Transverse colon (tissue), 4 donors: ENCODE measurements at regions of chr2 and their contacts with region 1.

Region 1: GRCh38 chr2:144578099-144578498 is 58.2 kb upstream of the ZEB2 start:
- DNase-seq: no peak
- H3K4me3 ChIP-seq: no peak overlapping the region
- H3K27ac ChIP-seq: no peak overlapping the region
- H3K4me1 ChIP-seq: no peaks in the 10 kb centered on the region
- H3K27me3 ChIP-seq: no peaks in the 10 kb centered on the region
- CTCF ChIP-seq: no peak
- EP300 ChIP-seq: no peak
- POLR2A ChIP-seq: no peak

Region 2: DNA sequence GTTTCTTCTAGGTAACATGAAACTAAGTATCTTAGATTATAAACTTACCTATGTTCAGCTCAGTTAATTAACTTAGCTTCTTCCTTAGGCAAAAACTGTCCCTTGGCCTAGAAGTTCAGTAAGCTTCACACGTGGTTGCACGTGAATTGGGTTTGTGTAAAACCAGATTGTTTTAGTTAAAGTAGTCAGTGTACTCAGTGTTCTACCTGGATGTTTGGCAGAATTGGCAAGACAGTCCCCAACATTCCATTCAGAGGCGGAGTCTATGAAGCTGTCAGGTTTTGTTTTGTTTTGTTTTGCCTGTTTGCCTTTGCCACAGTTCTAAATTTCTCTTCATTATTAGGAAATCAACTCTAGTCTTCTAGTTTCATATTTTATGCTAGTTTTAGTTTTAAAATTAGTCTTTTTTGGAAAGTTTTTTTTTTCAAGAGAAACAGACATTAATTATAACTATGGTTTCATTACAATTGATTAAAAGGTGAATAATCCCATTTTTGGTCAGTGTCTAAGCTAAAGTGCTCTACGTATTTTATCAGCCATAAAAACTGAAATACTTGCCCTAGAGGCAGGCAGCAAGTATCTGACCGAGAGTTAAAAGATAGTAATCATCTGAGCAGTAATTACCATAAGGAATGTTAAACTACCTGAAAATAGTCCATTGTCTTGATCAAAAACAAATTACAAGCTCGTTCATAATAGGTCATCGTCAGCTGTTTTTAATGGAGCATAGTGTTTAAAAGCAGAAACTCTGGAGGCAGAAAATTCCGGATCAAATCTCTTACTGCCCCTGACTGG is 47.3 kb after region 1 on chr2:
- in situ Hi-C with region 1: no loop called
- intact Hi-C with region 1: loop called (anchors 2 kb)
- DNase-seq: no peak
- H3K4me3 ChIP-seq: no peak overlapping the region
- H3K27ac ChIP-seq: no peak overlapping the region
- H3K4me1 ChIP-seq: no peaks in the 10 kb centered on the region
- H3K27me3 ChIP-seq: no peaks in the 10 kb centered on the region
- CTCF ChIP-seq: no peak
- EP300 ChIP-seq: no peak
- POLR2A ChIP-seq: no peak

Region 3: GRCh38 chr2:145043399-145043834 is 465.3 kb after region 1 on chr2:
- in situ Hi-C with region 1: no loop called
- intact Hi-C with region 1: no loop called
- DNase-seq: no peak
- H3K4me3 ChIP-seq: no peak overlapping the region
- H3K27ac ChIP-seq: no peak overlapping the region
- H3K4me1 ChIP-seq: no peaks in the 10 kb centered on the region
- H3K27me3 ChIP-seq: no peaks in the 10 kb centered on the region
- CTCF ChIP-seq: peak in 1 of 5 experiments; percentile 3
- EP300 ChIP-seq: no peak
- POLR2A ChIP-seq: no peak